Head of caudate nucleus (tissue), 42 donors: ENCODE measurements at regions of chr5 and their contacts with region 1.

Region 1: GRCh38 chr5:172044631-172045314 is 38.3 kb upstream of the FBXW11 start:
- DNase-seq: no peak

Region 2: DNA sequence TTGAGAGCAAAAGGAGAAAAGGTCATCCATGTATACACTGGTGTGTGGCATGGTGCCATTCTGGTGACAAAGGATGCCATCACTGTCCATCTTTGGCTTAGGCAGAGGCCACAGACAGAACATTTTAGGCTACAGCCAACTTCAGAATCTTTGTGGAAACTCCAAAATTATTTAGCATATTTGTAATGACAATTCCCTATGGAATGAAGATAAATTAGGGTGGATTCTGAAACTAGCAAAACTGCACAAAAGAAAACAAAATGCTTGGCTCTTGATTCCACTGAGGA is 130.8 kb before region 1 on chr5:
- intact Hi-C with region 1: loop called (anchors 5 kb)
- DNase-seq: peak in 1 of 42 donors; percentile 7